Colonic mucosa (tissue), 4 donors: ENCODE measurements at regions of chr16 and their contacts with region 1.

Region 1: GRCh38 chr16:58755989-58756649 is 22.0 kb upstream of the GOT2 start:
- DNase-seq: peak; percentile 76
- H3K4me3 ChIP-seq: no peak overlapping the region
- H3K27ac ChIP-seq: no peak overlapping the region
- H3K4me1 ChIP-seq: no peaks in the 10 kb centered on the region
- H3K27me3 ChIP-seq: no peaks in the 10 kb centered on the region
- CTCF ChIP-seq: peak; percentile 55

Region 2: GRCh38 chr16:58336332-58337089 is 419.6 kb before region 1 on chr16:
- intact Hi-C with region 1: loop called (anchors 5 kb)
- DNase-seq: peak; percentile 86
- H3K4me3 ChIP-seq: peak overlapping the region; percentile 7
- H3K27ac ChIP-seq: no peak overlapping the region
- H3K4me1 ChIP-seq: no peaks in the 10 kb centered on the region
- H3K27me3 ChIP-seq: no peaks in the 10 kb centered on the region
- CTCF ChIP-seq: peak; percentile 90

Region 3: DNA sequence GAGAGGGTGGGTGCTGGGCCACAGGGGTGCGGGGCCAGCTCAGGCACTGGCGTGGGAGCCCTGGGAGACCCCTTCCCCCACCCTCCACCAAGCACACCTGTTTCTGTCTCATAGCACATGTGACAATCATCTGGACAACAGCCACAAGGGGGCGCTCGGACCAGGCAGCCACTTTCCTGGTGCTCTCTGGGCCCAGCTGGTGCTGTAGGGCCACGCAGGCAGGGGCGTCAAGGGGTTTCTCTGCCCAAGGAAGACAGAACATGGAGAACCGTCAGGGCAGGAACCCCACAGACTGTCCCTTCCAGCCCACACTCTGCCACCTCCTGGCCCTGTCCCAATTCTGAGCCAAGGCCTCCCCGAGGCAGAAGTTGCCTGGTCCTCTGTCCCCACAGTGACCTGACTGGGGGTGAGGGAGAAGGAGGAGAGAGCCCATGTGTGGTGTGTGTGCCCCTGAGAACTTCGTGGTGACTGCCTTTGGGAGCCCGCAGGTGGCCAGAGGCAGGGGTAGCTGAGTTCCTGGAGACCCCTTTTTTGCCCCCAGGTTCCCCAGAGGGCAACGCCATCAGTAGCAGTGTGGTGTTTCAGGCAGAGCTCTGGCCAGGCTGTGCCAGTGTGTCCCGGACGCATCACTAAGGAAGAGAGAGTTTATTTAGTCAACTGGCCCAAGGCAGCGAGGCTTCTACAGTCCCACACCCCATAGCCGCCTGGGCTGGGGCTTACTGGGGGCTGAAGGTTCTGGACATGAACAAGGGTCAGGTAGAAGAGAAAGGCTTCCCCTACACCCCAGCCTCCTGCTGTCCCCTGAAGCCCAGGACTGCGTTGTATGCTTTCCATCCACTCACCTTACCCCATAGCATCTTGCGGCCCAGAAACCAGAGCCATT is 243.9 kb before region 1 on chr16:
- intact Hi-C with region 1: loop called (anchors 5 kb)
- DNase-seq: peak; percentile 84
- H3K4me3 ChIP-seq: no peak overlapping the region
- H3K27ac ChIP-seq: no peak overlapping the region
- H3K4me1 ChIP-seq: peaks cover 3% of the 10 kb centered on the region
- H3K27me3 ChIP-seq: no peaks in the 10 kb centered on the region
- CTCF ChIP-seq: peak; percentile 75

Region 4: GRCh38 chr16:58582971-58583765 is 173.0 kb before region 1 on chr16:
- intact Hi-C with region 1: no loop called
- DNase-seq: no peak
- H3K4me3 ChIP-seq: no peak overlapping the region
- H3K27ac ChIP-seq: no peak overlapping the region
- H3K4me1 ChIP-seq: no peaks in the 10 kb centered on the region
- H3K27me3 ChIP-seq: no peaks in the 10 kb centered on the region
- CTCF ChIP-seq: no peak

Region 5: GRCh38 chr16:58684354-58685083 is 71.6 kb before region 1 on chr16 and contains the start of gene SLC38A7:
- intact Hi-C with region 1: loop called (anchors 5 kb)
- DNase-seq: peak; percentile 91
- H3K4me3 ChIP-seq: peak within 1 kb of the TSS; percentile 97
- H3K27ac ChIP-seq: peak within 1 kb of the TSS; percentile 41
- H3K4me1 ChIP-seq: peaks cover 6% of the 10 kb centered on the region
- H3K27me3 ChIP-seq: no peaks in the 10 kb centered on the region
- CTCF ChIP-seq: no peak
- total RNA-seq, gene SLC38A7: 10.8 to 15.5 TPM